Activated B cell treated with CpG ODN at 0.5 μM for 24 hours (primary cell): ENCODE measurements at regions of chr4 and their contacts with region 1.

Region 1: DNA sequence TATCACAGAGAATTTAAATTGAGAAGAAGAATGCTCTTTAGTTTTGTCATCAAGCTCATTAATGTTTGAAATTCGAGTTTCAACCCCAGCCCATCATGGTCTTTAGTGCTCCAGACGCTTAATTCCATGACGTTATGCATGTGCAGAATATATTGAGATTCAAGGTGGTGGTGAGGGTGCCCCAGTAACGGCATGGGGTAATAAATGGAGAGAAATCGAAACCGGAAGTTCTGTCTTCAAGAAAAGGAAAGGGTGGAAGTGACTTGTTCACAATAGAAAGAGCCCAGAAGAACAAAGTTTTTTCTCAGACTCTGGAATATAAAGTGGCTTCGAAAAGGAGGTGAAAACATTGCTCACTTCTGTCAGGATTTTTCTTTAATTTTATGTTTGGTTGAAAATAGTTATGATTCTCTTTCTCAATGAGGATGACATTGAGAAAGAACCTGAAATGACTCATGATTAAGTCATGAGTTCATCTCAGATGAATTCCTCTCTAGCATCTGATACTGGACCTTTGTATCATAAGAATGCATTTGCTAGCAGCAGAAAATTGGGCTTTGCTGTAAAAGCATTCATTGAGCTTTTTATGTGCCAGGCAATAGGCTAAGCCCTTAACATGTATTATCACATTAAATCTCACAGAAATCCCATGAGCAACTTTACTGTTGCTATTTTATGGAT is 779 bp upstream of the DDX60L start:
- DNase-seq: no peak
- ATAC-seq: peak; percentile 53
- H3K4me3 Mint-ChIP-seq: peak overlapping the region; percentile 100
- H3K27ac Mint-ChIP-seq: peak overlapping the region; percentile 99
- H3K4me1 Mint-ChIP-seq: peaks cover 41% of the 10 kb centered on the region
- H3K27me3 Mint-ChIP-seq: peaks cover 3% of the 10 kb centered on the region
- CTCF ChIP-seq: no peak

Region 2: GRCh38 chr4:168318266-168318895 is 162.7 kb before region 1 on chr4 and contains the start of gene DDX60:
- CTCF ChIA-PET with region 1: no interaction called
- POLR2A ChIA-PET with region 1: interaction called, 12 read pairs
- intact Hi-C with region 1: loop called (anchors 1 kb)
- DNase-seq: peak; percentile 68
- ATAC-seq: peak; percentile 92
- H3K4me3 Mint-ChIP-seq: peak within 1 kb of the TSS; percentile 95
- H3K27ac Mint-ChIP-seq: peak within 1 kb of the TSS; percentile 96
- H3K4me1 Mint-ChIP-seq: peaks cover 20% of the 10 kb centered on the region
- H3K27me3 Mint-ChIP-seq: no peaks in the 10 kb centered on the region
- CTCF ChIP-seq: no peak
- total RNA-seq, gene DDX60: 17.6 and 17.9 TPM in 2 replicates

Region 3: DNA sequence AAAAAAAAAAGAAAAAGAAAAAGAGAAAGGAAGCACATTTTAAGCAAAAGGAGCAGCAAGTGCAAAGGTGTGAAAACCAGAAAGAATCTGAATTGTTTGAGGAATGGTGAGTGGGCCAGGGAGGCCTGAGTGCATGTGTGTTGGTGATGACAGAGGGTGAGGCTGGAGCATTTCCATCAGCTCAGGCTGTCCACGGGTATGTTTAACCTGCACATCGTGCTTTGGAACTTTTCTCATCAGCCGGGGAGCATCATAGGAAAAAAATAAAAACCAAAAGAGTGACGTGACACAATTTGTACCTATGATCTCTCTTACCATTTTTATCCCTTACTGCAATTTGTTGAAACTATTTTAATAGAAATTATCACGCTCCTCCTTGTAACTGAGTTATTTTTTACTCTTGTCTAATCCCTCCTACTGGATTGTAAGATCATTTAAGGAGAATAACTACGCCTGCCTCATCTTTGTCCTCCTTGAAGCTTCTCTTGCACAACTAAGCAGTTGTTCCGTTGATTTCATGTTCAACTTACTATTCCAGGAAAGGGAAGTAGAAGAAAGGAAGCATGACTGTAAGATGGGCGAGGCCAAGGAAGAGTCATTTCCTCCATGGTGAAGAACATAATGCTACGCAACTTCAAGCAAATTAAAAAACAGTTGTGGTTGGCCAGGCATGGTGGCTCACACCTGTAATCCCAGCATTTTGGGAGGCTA is 22.7 kb after region 1 on chr4:
- CTCF ChIA-PET with region 1: no interaction called
- POLR2A ChIA-PET with region 1: no interaction called
- intact Hi-C with region 1: no loop called
- DNase-seq: no peak
- ATAC-seq: no peak
- H3K4me3 Mint-ChIP-seq: no peak overlapping the region
- H3K27ac Mint-ChIP-seq: no peak overlapping the region
- H3K4me1 Mint-ChIP-seq: peaks cover 6% of the 10 kb centered on the region
- H3K27me3 Mint-ChIP-seq: peaks cover 5% of the 10 kb centered on the region
- CTCF ChIP-seq: no peak

Region 4: GRCh38 chr4:168514249-168514852 is 33.3 kb after region 1 on chr4:
- CTCF ChIA-PET with region 1: interaction called, 3 read pairs
- POLR2A ChIA-PET with region 1: interaction called, 5 read pairs
- intact Hi-C with region 1: loop called (anchors 2 kb)
- DNase-seq: no peak
- ATAC-seq: no peak
- H3K4me3 Mint-ChIP-seq: no peak overlapping the region
- H3K27ac Mint-ChIP-seq: no peak overlapping the region
- H3K4me1 Mint-ChIP-seq: no peaks in the 10 kb centered on the region
- H3K27me3 Mint-ChIP-seq: peaks cover 2% of the 10 kb centered on the region
- CTCF ChIP-seq: no peak

Region 5: GRCh38 chr4:169619959-169620879 is 1139.1 kb after region 1 on chr4 and contains the start of gene CLCN3:
- CTCF ChIA-PET with region 1: no interaction called
- POLR2A ChIA-PET with region 1: no interaction called
- intact Hi-C with region 1: loop called (anchors 1 kb)
- DNase-seq: peak; percentile 92
- ATAC-seq: peak; percentile 93
- H3K4me3 Mint-ChIP-seq: peak within 1 kb of the TSS; percentile 100
- H3K27ac Mint-ChIP-seq: peak within 1 kb of the TSS; percentile 99
- H3K4me1 Mint-ChIP-seq: peaks cover 41% of the 10 kb centered on the region
- H3K27me3 Mint-ChIP-seq: no peaks in the 10 kb centered on the region
- CTCF ChIP-seq: no peak
- total RNA-seq, gene CLCN3: 23.0 and 28.6 TPM in 2 replicates

Region 6: GRCh38 chr4:169659716-169660670 is 1178.9 kb after region 1 on chr4:
- CTCF ChIA-PET with region 1: no interaction called
- POLR2A ChIA-PET with region 1: no interaction called
- intact Hi-C with region 1: loop called (anchors 1 kb)
- DNase-seq: peak; percentile 28
- ATAC-seq: peak; percentile 92
- H3K4me3 Mint-ChIP-seq: peak overlapping the region; percentile 83
- H3K27ac Mint-ChIP-seq: peak overlapping the region; percentile 95
- H3K4me1 Mint-ChIP-seq: peaks cover 22% of the 10 kb centered on the region
- H3K27me3 Mint-ChIP-seq: no peaks in the 10 kb centered on the region
- CTCF ChIP-seq: no peak

Region 7: DNA sequence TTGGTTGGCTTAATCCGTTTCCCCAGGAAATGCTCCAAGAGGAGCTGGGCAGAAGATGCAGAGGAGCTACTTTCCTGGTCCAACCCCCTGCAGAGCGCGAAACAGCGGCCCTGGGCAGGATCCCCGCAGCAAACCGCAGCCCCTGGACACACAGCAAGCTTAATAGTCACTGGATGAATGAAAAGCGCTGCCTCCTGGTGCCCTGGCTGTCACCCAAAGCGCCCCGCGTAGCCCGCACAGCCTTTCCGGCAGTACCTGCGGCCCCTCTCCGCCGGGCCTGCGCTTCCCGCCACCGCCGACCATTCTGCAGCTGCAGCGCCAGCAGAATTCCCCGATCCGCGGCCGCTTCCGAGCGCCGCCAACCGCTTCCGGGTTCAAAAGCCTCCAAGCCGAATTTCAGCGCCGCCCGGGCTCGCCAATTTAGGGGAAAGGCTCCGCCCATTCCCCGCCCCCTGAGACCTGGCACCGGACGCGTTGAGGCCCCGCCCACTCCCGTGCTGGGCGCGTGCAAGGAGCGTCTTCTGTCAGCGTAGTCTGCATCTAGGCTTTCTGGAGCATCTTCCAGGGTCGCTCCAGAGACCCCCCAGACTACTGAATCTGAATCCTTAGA is 1276.6 kb after region 1 on chr4 and contains the start of gene HPF1:
- CTCF ChIA-PET with region 1: no interaction called
- POLR2A ChIA-PET with region 1: no interaction called
- intact Hi-C with region 1: loop called (anchors 5 kb)
- DNase-seq: peak; percentile 85
- ATAC-seq: peak; percentile 95
- H3K4me3 Mint-ChIP-seq: peak within 1 kb of the TSS; percentile 92
- H3K27ac Mint-ChIP-seq: peak within 1 kb of the TSS; percentile 68
- H3K4me1 Mint-ChIP-seq: peaks cover 23% of the 10 kb centered on the region
- H3K27me3 Mint-ChIP-seq: no peaks in the 10 kb centered on the region
- CTCF ChIP-seq: no peak
- total RNA-seq, gene HPF1: 17.9 and 19.5 TPM in 2 replicates

Region 8: DNA sequence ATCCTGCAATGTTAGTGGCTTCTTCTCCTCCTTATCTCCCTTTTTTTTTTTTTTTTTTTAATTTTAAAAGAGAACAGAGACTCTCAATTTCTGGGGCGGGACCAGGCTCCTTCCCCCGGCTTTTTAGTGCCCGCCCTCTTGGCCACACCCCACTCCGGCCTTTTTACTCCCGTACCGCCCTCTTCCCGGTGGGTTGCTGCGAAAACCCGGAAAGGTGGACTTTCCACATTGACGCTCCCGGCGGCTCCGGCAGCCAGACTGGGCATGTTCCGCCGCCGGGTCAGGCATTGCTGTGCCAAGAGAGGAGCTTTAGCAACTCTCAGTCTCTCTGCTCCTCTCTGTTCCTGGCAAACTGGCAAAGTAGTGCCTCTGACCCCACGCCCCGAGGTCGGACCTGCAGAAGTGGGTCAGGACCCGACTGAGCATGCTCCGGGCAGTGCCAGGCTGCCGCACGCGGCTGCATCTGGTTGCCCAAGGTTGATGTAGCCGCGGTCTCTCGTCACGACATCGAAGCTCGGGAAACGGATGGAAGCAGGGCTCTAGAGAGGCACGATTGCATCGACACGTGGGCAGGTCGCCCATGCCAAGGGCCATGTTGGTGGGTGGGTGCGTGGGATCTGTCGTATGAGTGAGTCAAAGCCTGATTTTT is 1546.2 kb after region 1 on chr4:
- CTCF ChIA-PET with region 1: no interaction called
- POLR2A ChIA-PET with region 1: no interaction called
- intact Hi-C with region 1: loop called (anchors 1 kb)
- DNase-seq: peak; percentile 86
- ATAC-seq: peak; percentile 76
- H3K4me3 Mint-ChIP-seq: peak overlapping the region; percentile 89
- H3K27ac Mint-ChIP-seq: peak overlapping the region; percentile 47
- H3K4me1 Mint-ChIP-seq: peaks cover 13% of the 10 kb centered on the region
- H3K27me3 Mint-ChIP-seq: peaks cover 21% of the 10 kb centered on the region
- CTCF ChIP-seq: no peak

Region 9: DNA sequence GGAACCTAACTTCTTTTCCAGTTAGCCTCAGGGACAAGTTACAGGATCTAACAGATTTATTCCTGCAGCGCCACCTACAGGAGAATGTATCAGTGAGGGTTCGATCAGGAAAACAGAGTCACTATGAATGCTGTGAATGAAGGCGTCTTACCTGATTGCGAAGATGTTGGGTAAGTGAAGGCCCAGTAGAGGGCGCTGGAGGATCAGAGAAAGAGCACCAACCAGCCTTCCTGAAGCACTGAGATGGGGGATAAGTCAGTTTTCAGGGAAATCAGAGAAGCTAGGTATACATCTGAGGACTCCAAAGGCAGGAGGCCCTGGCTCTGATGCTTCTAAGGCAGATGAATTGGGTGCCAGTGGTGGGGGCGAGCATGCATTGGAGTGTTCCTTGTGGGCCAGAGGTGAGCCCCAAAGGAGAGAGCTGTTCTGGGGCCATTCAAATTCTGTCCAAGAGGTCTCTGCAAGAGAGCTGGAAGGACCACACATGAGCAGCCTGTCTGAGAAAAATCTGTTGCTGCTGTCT is 1778.6 kb after region 1 on chr4:
- CTCF ChIA-PET with region 1: no interaction called
- POLR2A ChIA-PET with region 1: no interaction called
- intact Hi-C with region 1: no loop called
- DNase-seq: no peak
- ATAC-seq: peak; percentile 54
- H3K4me3 Mint-ChIP-seq: no peak overlapping the region
- H3K27ac Mint-ChIP-seq: no peak overlapping the region
- H3K4me1 Mint-ChIP-seq: peaks cover 4% of the 10 kb centered on the region
- H3K27me3 Mint-ChIP-seq: no peaks in the 10 kb centered on the region
- CTCF ChIP-seq: no peak